Activated B cell treated with CpG ODN at 0.5 μM for 24 hours (primary cell): ENCODE measurements at regions of chr14 and their contacts with region 1.

Region 1: DNA sequence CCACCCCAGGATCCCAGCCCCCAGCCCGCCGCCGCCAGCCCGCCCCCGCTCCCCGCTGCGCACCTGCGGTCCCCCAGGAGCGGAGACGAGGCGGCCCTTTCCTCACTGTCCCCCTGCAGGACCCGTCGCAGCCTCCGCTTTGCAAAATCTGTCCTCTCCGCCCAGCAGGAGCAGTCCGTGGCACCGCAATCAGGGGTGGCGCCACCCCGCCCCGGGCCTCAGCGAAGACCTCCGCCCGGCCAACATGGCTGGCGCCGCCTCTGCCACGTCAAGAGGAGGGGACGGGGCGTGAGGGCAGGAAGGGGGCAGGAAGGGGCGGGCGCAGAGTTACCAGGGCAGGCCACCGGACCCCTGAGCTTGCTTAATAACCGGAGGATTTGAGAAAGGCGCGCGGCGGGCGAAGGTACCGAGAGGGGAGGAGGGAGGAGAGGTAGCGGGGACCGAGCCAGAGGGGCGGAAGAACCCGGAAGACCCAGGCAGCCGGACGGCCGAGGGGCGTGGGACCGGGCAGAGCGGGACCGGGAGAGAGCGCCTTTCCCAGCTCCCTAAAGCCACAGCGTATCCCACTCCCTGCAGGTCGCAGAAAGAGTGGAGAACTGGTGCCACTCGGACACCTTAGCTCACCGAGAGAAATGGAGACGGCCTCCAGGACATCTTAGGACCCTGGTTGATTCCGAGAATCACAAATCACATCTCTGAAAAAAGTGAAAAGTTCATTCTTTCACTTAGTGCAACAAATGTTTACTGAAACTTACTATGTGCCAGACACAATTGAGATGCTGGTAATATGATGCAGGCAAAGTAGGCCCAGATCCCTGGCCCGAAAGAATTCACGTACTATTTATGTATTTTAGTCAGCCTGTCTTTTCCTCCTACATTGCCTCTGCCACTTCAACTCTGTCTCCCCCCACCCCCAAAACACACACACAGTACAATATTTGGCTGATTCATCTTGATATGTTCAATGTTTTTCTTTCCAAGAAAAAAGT is at the start of gene SEC23A:
- DNase-seq: peak; percentile 79
- ATAC-seq: peak; percentile 98
- H3K4me3 Mint-ChIP-seq: peak within 1 kb of the TSS; percentile 96
- H3K27ac Mint-ChIP-seq: peak within 1 kb of the TSS; percentile 97
- H3K4me1 Mint-ChIP-seq: peaks cover 35% of the 10 kb centered on the region
- H3K27me3 Mint-ChIP-seq: no peaks in the 10 kb centered on the region
- CTCF ChIP-seq: no peak
- total RNA-seq, gene SEC23A: 38.3 and 39.4 TPM in 2 replicates

Region 2: DNA sequence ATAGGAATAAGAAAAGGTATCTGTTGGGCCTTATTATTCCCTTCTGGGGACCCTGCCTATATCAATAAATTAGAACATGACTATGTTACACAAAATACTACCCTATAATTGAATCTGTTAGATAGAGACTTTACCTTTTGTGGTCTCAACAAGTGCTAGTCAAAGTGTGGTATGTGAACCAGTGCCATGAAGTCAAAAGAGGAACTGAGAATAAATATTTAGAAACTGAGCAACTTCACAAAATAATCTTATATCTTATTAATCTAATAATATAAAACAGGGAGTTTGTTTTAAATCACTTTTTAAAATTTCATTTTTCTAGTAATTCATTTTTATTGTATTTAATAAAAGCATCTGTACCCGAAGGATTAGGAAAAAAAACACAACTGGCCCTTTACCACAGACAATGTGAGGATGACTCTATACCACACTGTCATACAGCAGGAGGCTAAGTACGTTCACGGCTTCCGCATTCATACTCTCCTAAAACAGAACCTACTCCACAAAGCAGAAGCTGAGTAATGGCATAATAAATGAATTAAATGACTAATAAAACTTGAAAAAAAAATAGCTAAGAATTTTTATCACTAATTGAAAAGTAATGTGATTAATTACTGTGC is 42.3 kb before region 1 on chr14:
- CTCF ChIA-PET with region 1: interaction called, 3 read pairs
- POLR2A ChIA-PET with region 1: interaction called, 17 read pairs
- intact Hi-C with region 1: loop called (anchors 1 kb)
- DNase-seq: no peak
- ATAC-seq: peak; percentile 98
- H3K4me3 Mint-ChIP-seq: peak overlapping the region; percentile 47
- H3K27ac Mint-ChIP-seq: peak overlapping the region; percentile 85
- H3K4me1 Mint-ChIP-seq: peaks cover 21% of the 10 kb centered on the region
- H3K27me3 Mint-ChIP-seq: no peaks in the 10 kb centered on the region
- CTCF ChIP-seq: no peak

Region 3: GRCh38 chr14:39169541-39169900 is 66.3 kb after region 1 on chr14:
- CTCF ChIA-PET with region 1: no interaction called
- POLR2A ChIA-PET with region 1: interaction called, 46 read pairs
- intact Hi-C with region 1: loop called (anchors 1 kb)
- DNase-seq: no peak
- ATAC-seq: no peak
- H3K4me3 Mint-ChIP-seq: peak overlapping the region; percentile 98
- H3K27ac Mint-ChIP-seq: peak overlapping the region; percentile 98
- H3K4me1 Mint-ChIP-seq: peaks cover 39% of the 10 kb centered on the region
- H3K27me3 Mint-ChIP-seq: no peaks in the 10 kb centered on the region
- CTCF ChIP-seq: no peak

Region 4: DNA sequence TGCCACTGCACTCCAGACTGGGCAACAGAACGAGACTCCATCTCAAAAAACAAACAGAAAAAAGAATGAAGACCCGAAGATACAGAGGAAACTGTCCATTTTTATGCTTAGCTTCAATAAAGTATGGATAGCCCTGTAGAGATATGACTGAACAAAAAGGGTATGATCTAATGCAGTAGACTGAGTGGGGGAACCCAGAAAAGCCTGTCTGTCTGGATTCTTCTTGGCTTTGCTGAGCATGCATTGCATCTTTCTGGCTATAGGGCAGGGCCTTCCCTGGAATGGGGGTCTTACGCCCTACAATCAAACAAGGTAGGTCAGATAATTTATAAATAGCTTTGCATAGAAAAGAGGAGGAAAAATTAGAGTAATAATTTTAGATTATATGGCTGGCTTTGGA is 140.6 kb after region 1 on chr14:
- CTCF ChIA-PET with region 1: no interaction called
- POLR2A ChIA-PET with region 1: no interaction called
- intact Hi-C with region 1: no loop called
- DNase-seq: no peak
- ATAC-seq: no peak
- H3K4me3 Mint-ChIP-seq: no peak overlapping the region
- H3K27ac Mint-ChIP-seq: no peak overlapping the region
- H3K4me1 Mint-ChIP-seq: no peaks in the 10 kb centered on the region
- H3K27me3 Mint-ChIP-seq: peaks cover 16% of the 10 kb centered on the region
- CTCF ChIP-seq: no peak

Region 5: DNA sequence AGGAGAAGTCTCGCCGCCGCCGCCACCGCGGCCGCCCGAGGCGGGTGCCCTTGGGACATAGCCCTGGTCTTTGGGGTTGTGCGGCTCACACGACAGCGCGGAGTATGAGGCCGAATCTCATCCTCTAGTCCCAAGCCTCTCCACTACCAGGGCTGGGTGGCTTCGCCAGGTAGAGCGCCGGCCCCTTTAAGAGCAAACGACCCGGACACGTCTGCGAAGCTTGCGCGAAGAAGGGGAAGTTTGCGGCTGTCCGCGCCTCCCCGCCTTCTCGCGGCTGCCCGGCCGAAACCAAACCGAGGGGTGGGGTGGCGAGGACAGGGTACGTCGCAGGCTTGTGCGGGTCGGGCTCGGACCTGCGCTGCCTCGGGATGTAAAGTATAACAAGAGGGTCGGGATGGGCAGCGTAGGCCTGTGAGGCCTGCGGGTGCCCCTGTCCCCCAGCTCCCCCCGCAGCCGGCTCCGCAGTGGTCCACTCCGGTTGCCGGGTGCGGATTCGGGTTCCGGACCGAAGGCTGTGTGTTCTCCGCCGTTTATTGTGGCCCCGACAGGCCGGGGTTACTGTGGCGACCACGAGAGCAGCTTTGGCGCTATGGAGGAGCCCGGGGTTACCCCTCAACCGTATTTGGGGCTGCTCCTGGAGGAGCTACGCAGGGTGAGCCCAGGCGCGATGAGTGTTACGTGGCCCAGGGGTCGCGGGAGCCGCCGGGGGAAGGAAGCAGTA is 163.8 kb after region 1 on chr14:
- CTCF ChIA-PET with region 1: no interaction called
- POLR2A ChIA-PET with region 1: interaction called, 22 read pairs
- intact Hi-C with region 1: loop called (anchors 1 kb)
- DNase-seq: peak; percentile 81
- ATAC-seq: peak; percentile 84
- H3K4me3 Mint-ChIP-seq: peak overlapping the region; percentile 96
- H3K27ac Mint-ChIP-seq: peak overlapping the region; percentile 99
- H3K4me1 Mint-ChIP-seq: peaks cover 53% of the 10 kb centered on the region
- H3K27me3 Mint-ChIP-seq: no peaks in the 10 kb centered on the region
- CTCF ChIP-seq: no peak

Region 6: GRCh38 chr14:39469094-39469710 is 365.9 kb after region 1 on chr14:
- CTCF ChIA-PET with region 1: no interaction called
- POLR2A ChIA-PET with region 1: no interaction called
- intact Hi-C with region 1: loop called (anchors 1 kb)
- DNase-seq: peak; percentile 19
- ATAC-seq: peak; percentile 70
- H3K4me3 Mint-ChIP-seq: no peak overlapping the region
- H3K27ac Mint-ChIP-seq: no peak overlapping the region
- H3K4me1 Mint-ChIP-seq: no peaks in the 10 kb centered on the region
- H3K27me3 Mint-ChIP-seq: peaks cover 21% of the 10 kb centered on the region
- CTCF ChIP-seq: no peak